Prostate gland (tissue), 2 donors: ENCODE measurements at regions of chr19 and their contacts with region 1.

Region 1: GRCh38 chr19:13880059-13881043 is 3.4 kb downstream of the NANOS3 start:
- DNase-seq: peak; percentile 96
- H3K4me3 ChIP-seq: peak overlapping the region in 1 of 2 donors; percentile 15
- H3K27ac ChIP-seq: peak overlapping the region; percentile 31 to 75
- H3K4me1 ChIP-seq: peaks cover 2% of the 10 kb centered on the region
- H3K27me3 ChIP-seq: no peaks in the 10 kb centered on the region
- CTCF ChIP-seq: peak; percentile 98 to 100 (median 100)
- POLR2A ChIP-seq: peak; percentile 67

Region 2: GRCh38 chr19:14073261-14073924 is 193.0 kb after region 1 on chr19:
- intact Hi-C with region 1: loop called (anchors 2 kb)
- DNase-seq: peak; percentile 53
- H3K4me3 ChIP-seq: peak overlapping the region; percentile 35 to 66
- H3K27ac ChIP-seq: peak overlapping the region; percentile 76 to 91
- H3K4me1 ChIP-seq: peaks cover 13% of the 10 kb centered on the region
- H3K27me3 ChIP-seq: no peaks in the 10 kb centered on the region
- CTCF ChIP-seq: peak; percentile 13 to 93 (median 63)
- POLR2A ChIP-seq: peak; percentile 57